ENCODE measurements at regions of chr9 and their contacts with region 1.

Region 1: GRCh38 chr9:134443168-134444037 is 117.1 kb downstream of the RXRA start:
- DNase-seq: peak; percentile 88 to 90 (median 90)
- ATAC-seq: peak; percentile 70 to 78 (median 76)
- H3K4me3 ChIP-seq: no peak overlapping the region
- H3K27ac ChIP-seq: peak overlapping the region in 2 of 3 donors; percentile 34 to 40
- H3K4me1 ChIP-seq: peaks cover 0 to 41% (median 6%) of the 10 kb centered on the region in 4 donors
- H3K27me3 ChIP-seq: no peaks in the 10 kb centered on the region
- CTCF ChIP-seq: peak; percentile 97 to 100 (median 98)
- POLR2A ChIP-seq: no peak

Region 2: GRCh38 chr9:134165357-134166310 is 277.8 kb before region 1 on chr9:
- intact Hi-C with region 1: loop called (anchors 5 kb)
- DNase-seq: peak in 2 of 3 donors; percentile 60 to 64
- ATAC-seq: no peak
- H3K4me3 ChIP-seq: no peak overlapping the region
- H3K27ac ChIP-seq: no peak overlapping the region
- H3K4me1 ChIP-seq: peaks cover 0 to 28% (median 9%) of the 10 kb centered on the region in 4 donors
- H3K27me3 ChIP-seq: no peaks in the 10 kb centered on the region
- CTCF ChIP-seq: no peak
- POLR2A ChIP-seq: no peak

Region 3: DNA sequence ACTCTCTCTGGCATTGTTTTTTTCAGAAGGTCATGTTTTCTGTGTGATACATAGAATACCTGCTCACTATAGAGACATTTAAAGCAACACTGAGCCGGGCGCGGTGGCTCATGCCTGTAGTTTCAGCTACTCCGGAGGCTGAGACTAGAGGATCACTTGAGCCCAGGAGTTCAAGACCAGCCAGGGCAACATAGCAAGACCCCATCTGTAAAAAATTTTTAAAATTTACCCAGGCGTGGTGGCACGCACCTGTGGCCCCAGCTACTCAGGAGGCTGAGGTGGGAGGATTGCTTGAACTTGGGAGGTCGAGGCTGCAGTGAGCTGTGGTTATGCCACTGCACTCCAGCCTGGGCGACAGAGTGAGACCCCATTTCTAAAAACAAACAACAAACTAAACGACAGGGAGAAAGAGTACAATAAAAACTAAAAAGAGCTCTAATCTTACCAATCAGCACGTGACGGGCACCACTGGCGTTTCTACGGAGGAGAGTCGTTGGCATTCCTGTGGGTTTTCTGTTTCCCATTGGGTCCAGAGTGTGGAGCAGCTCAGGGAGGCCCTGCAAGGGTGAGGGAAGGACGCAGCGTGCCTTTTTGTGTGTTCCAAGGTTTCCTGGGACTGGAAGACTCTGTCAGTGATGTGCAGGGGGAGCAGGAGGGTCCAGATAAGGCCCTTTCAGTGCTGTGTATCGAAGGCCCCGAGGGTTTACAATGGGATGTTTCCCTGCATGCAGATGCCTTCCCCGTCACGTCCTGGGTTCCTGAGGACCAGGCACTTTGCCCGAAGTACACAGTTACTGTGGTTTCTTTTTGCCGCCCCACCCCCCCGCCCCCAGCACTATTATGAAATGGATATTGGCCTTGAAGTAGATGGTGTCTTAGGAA is 271.8 kb before region 1 on chr9:
- intact Hi-C with region 1: loop called (anchors 5 kb)
- DNase-seq: peak in 2 of 3 donors; percentile 56 to 64
- ATAC-seq: peak in 1 of 4 donors; percentile 1
- H3K4me3 ChIP-seq: no peak overlapping the region
- H3K27ac ChIP-seq: peak overlapping the region in 2 of 3 donors; percentile 2 to 95
- H3K4me1 ChIP-seq: peaks cover 0 to 48% (median 20%) of the 10 kb centered on the region in 4 donors
- H3K27me3 ChIP-seq: no peaks in the 10 kb centered on the region
- CTCF ChIP-seq: no peak
- POLR2A ChIP-seq: no peak

Region 4: GRCh38 chr9:134276453-134277245 is 166.8 kb before region 1 on chr9:
- intact Hi-C with region 1: no loop called
- DNase-seq: no peak
- ATAC-seq: no peak
- H3K4me3 ChIP-seq: no peak overlapping the region
- H3K27ac ChIP-seq: no peak overlapping the region
- H3K4me1 ChIP-seq: peaks cover 0 to 15% (median 6%) of the 10 kb centered on the region in 4 donors
- H3K27me3 ChIP-seq: no peaks in the 10 kb centered on the region
- CTCF ChIP-seq: no peak
- POLR2A ChIP-seq: no peak